WTC11 (cell line): ENCODE measurements at regions of chr12 and their contacts with region 1.

Region 1: GRCh38 chr12:3034067-3034750 is 43.0 kb upstream of the TSPAN9 start:
- DNase-seq: peak; percentile 89
- ATAC-seq: peak; percentile 96
- H3K4me3 Mint-ChIP-seq: no peak overlapping the region
- H3K27ac Mint-ChIP-seq: peak overlapping the region; percentile 82
- H3K4me1 Mint-ChIP-seq: peaks cover 7% of the 10 kb centered on the region
- H3K27me3 Mint-ChIP-seq: no peaks in the 10 kb centered on the region
- CTCF ChIP-seq: peak; percentile 61

Region 2: GRCh38 chr12:2853626-2854025 is 180.6 kb before region 1 on chr12:
- CTCF ChIA-PET with region 1: interaction called, 26 read pairs
- POLR2A ChIA-PET with region 1: no interaction called
- DNase-seq: peak; percentile 95
- ATAC-seq: peak; percentile 93
- H3K4me3 Mint-ChIP-seq: no peak overlapping the region
- H3K27ac Mint-ChIP-seq: no peak overlapping the region
- H3K4me1 Mint-ChIP-seq: peaks cover 3% of the 10 kb centered on the region; the same call in 1 of the 2 replicates
- H3K27me3 Mint-ChIP-seq: no peaks in the 10 kb centered on the region; the same call in 1 of the 2 replicates
- CTCF ChIP-seq: peak; percentile 88

Region 3: DNA sequence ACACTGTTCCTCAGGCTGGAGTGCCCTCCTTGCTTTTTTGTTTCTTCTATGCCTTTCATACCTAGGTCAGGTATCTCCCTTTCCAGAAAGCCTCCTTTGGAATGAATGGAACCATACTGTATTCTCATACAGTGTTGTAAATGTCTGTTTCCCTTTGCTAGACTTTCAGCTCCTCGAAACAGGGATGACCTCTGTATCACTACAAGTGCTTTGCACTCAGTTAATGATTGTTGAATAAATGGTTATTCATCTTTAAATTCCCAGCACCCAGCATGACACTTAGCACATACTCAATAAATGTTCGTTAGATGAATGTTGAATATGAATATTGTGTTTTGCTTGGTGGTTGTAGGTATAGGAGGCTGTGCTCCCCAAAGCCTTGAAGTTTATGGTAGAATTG is 149.4 kb before region 1 on chr12:
- CTCF ChIA-PET with region 1: interaction called, 24 read pairs
- POLR2A ChIA-PET with region 1: interaction called, 3 read pairs
- DNase-seq: no peak
- ATAC-seq: no peak
- H3K4me3 Mint-ChIP-seq: no peak overlapping the region
- H3K27ac Mint-ChIP-seq: peak overlapping the region; percentile 91
- H3K4me1 Mint-ChIP-seq: peaks cover 12% of the 10 kb centered on the region
- H3K27me3 Mint-ChIP-seq: no peaks in the 10 kb centered on the region
- CTCF ChIP-seq: no peak

Region 4: DNA sequence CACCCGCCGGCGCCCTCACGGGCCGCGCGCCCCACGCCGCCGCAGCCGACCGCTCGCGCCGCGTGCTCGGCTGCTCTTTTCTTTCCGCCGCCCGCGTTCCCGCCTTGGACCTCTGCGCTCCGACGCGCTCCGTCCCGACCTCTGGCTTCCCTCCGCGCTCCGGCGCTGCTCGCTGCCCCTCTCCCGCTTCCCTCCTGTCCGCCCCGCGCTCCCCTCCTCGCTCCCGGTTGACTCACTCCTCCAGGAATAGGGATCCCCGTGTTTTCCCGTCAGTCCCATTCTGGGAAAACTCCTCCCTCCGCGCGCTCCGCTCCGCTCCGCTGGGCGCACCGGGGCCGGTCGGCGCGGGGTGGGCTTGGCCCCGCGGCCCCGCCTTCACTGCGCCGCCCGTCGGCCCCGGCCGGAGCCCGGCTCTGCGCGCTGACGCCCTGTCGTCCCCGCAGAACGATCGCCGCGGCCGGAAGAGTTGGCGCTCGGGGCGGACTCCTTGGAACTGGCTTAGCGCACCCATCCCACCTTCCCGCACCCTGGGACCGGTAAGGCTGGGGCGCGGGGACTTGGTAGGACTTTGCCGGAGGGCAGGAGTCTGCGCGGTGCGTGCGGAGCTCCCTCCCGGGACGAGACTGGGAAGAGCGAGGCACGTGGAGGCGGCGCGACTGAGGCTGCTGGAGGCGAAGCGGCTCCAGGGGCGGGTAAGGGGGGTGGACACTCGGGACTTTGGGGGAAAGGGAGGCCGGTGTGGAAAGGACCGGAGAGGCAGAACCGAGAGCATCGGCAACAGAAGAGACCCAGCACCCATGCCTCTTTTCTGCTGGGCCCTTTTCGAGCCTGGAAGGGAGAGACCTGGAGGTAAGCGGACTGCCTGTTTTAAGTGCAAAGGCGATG is 74.5 kb before region 1 on chr12:
- CTCF ChIA-PET with region 1: interaction called, 17 read pairs
- POLR2A ChIA-PET with region 1: interaction called, 3 read pairs
- DNase-seq: peak; percentile 49
- ATAC-seq: peak; percentile 7
- H3K4me3 Mint-ChIP-seq: peak overlapping the region; percentile 84
- H3K27ac Mint-ChIP-seq: peak overlapping the region; percentile 52
- H3K4me1 Mint-ChIP-seq: peaks cover 54% of the 10 kb centered on the region
- H3K27me3 Mint-ChIP-seq: no peaks in the 10 kb centered on the region; the same call in 1 of the 2 replicates
- CTCF ChIP-seq: no peak

Region 5: GRCh38 chr12:3004655-3005565 is 29.3 kb before region 1 on chr12:
- CTCF ChIA-PET with region 1: interaction called, 32 read pairs
- POLR2A ChIA-PET with region 1: no interaction called
- DNase-seq: no peak
- ATAC-seq: peak; percentile 40
- H3K4me3 Mint-ChIP-seq: no peak overlapping the region
- H3K27ac Mint-ChIP-seq: peak overlapping the region; percentile 82
- H3K4me1 Mint-ChIP-seq: peaks cover 20% of the 10 kb centered on the region
- H3K27me3 Mint-ChIP-seq: no peaks in the 10 kb centered on the region
- CTCF ChIP-seq: no peak

Region 6: DNA sequence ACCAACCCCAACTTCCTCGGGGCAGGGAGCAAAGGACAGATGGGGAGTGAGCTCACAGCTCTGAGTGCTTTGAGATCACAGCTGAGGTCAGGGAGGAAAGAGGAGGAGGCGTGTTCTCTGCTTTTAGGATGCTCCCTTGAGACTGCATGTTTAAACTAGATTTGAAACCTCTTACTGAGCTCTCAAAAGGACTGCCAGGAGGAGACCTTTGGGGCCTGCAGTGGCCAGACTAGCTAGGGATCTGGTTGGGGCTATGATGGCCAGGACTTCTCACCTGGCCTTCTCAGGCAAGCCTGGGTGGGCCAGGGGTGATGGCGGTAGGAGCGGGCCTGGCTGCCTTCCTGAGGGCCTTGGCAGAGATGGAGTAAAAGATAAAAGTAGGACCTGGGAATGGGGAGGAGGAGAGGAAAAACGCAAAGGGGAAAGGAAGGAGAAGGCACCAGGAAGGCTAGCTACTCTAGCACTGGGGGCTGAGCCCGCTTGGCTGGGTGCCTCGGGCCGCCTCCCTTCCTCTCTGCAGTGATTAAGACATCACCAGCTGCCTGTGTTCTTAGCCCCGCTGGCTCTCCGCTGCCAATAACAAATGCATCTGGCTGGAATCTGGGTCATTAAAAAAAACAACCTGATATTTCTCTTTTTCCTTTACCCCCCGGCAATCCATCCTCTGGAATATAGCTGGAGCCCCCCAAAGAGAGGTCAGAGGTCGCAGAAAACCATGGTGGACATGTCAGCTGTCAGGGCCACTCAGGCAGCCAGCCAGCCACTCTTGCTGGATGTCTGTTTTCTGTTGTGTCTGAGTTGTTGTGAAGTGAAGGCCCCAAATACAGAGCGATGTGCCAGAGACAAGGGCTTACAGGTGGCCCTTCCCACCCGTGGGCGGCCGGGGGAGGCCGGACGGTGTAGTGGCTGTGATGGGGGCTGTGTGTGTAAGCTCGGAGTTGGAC is 184.3 kb after region 1 on chr12:
- CTCF ChIA-PET with region 1: no interaction called
- POLR2A ChIA-PET with region 1: no interaction called
- DNase-seq: no peak
- ATAC-seq: no peak
- H3K4me3 Mint-ChIP-seq: no peak overlapping the region
- H3K27ac Mint-ChIP-seq: peak overlapping the region; percentile 51
- H3K4me1 Mint-ChIP-seq: peaks cover 20% of the 10 kb centered on the region
- H3K27me3 Mint-ChIP-seq: no peaks in the 10 kb centered on the region
- CTCF ChIP-seq: no peak